CD14-positive monocyte (primary cell): ENCODE measurements at regions of chr1 and their contacts with region 1.

Region 1: DNA sequence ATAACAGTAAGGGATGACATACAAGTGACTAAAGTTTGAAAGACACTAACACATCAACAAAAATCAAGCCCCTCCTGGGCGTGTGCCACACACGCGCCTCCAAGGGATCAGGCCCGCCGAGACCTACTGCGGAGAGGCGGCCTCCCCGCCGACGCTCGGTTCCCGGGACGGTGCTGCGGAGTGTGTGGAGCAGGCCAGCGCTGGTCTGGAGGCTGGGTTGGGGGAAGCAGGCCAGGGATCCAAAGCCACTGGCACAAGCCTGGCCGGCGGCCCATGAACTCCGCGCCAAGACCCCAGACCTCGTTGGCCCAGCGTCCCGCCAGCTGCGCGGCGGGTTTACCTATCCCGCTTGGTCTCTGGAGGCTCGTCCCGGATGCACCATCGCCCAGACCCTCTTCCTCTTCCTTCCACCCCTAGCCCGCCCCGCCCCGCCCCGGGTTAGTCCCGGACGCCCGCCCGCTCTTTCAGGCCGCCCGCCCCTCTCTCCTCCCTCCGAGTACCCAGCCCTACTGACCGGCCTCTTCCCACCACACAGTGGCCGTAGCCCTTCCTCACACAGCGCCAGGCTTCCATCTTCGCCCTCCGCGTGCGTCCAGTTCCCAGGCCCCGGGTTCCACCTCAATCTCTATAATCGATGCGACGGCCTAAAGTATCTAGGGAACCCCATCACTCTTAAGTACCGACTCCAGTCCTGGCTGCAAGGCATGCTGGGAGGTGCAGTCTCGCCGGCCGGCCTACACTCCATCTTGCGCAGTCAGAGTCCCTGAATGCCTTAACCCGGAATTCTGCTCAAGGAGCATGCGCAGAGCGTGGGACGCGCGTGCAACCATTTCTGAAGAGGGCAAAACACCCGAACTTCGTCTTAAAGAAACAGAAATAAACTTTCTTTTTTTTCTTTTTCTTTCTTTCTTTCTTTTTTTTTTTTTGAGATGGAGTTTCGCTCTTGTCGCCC is at the start of gene ANGEL2:
- DNase-seq: peak; percentile 94 to 95 (median 94)
- H3K4me3 ChIP-seq: peak within 1 kb of the TSS; percentile 71 to 92 (median 81)
- H3K4me3 Mint-ChIP-seq: peak within 1 kb of the TSS; percentile 100
- H3K27ac ChIP-seq: peak within 1 kb of the TSS; percentile 87 to 90
- H3K27ac Mint-ChIP-seq: peak within 1 kb of the TSS; percentile 91 to 99 (median 98)
- H3K4me1 ChIP-seq: peaks cover 17 to 20% of the 10 kb centered on the region in 2 donors
- H3K4me1 Mint-ChIP-seq: peaks cover 17% of the 10 kb centered on the region
- H3K27me3 ChIP-seq: no peaks in the 10 kb centered on the region
- H3K27me3 Mint-ChIP-seq: no peaks in the 10 kb centered on the region
- CTCF ChIP-seq: no peak
- polyA plus RNA-seq, gene ANGEL2: 17.5 to 29.0 (median 18.3) TPM

Region 2: DNA sequence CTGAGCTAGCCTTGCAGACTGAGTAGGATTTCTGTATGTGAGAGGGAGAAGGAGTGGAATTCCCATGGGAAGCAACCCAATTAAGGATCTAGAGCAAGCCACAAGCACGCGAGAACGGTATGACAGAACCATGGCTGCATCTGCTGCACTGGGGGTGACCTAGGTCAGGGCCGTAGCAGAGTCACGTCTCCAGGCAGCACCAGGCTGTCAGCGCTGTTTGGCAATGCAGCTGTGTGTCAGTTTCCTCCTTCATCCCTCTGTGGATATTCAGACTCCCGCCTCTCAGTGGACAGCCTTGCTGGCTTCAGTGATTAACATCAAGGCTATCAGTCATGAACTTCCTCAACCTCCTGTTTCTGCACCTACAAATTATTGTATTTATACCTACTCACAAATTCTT is 848.3 kb before region 1 on chr1:
- intact Hi-C with region 1: no loop called
- DNase-seq: peak; percentile 50 to 59 (median 57)
- H3K4me3 ChIP-seq: no peak overlapping the region
- H3K4me3 Mint-ChIP-seq: peak overlapping the region in 1 of 2 donors; percentile 35
- H3K27ac ChIP-seq: no peak overlapping the region
- H3K27ac Mint-ChIP-seq: peak overlapping the region in 1 of 7 donors; percentile 2
- H3K4me1 ChIP-seq: peaks cover 8% of the 10 kb centered on the region in 2 donors
- H3K4me1 Mint-ChIP-seq: peaks cover 8% of the 10 kb centered on the region
- H3K27me3 ChIP-seq: no peaks in the 10 kb centered on the region
- H3K27me3 Mint-ChIP-seq: peaks cover 0 to 2% (median 0%) of the 10 kb centered on the region in 3 donors
- CTCF ChIP-seq: no peak

Region 3: DNA sequence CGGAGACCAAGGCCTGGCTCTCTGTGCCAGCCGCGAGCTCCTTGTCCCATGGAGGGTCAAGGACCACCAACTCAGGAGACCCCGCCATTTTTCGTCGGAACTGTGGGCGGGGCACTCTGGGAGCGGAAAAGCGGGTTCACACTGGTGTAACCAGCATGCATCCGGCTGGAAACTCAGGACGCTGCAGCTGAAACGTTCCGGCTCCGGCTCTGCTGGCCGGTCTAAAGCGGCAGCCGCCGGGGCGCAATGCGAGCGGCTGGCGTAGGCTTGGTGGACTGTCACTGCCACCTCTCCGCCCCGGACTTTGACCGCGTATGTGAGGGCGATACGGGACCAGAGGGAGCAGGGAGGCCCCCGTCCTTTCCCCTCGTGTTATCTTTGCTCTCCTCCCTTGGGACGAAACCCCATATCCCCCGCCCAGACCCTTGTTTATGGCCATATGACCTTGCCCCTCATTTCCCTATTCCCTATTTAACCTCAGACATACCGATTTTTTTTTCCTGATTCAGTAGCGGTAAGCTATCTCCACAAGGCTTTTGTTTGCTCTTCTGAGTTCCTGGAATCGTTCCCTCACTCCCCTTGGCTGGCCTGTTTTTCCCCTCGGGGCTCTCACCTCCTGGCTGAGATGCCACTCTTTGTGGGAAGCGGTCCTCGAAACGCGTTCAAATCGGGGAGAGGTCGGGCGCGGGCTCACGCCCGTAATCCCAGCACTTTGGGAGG is 223.5 kb before region 1 on chr1 and contains the starts of genes NSL1 and TATDN3:
- intact Hi-C with region 1: loop called in 1 of 2 experiments (anchors 10 kb)
- DNase-seq: peak; percentile 93 to 95 (median 95)
- H3K4me3 ChIP-seq: peak within 1 kb of the TSS; percentile 84 to 96 (median 92)
- H3K4me3 Mint-ChIP-seq: peak within 1 kb of the TSS; percentile 97 to 100
- H3K27ac ChIP-seq: peak within 1 kb of the TSS; percentile 96 to 98
- H3K27ac Mint-ChIP-seq: peak within 1 kb of the TSS; percentile 97 to 100 (median 98)
- H3K4me1 ChIP-seq: peaks cover 53% of the 10 kb centered on the region in 2 donors
- H3K4me1 Mint-ChIP-seq: peaks cover 38% of the 10 kb centered on the region
- H3K27me3 ChIP-seq: no peaks in the 10 kb centered on the region
- H3K27me3 Mint-ChIP-seq: no peaks in the 10 kb centered on the region
- CTCF ChIP-seq: no peak
- polyA plus RNA-seq, gene NSL1: 16.8 to 80.3 (median 62.3) TPM
- polyA plus RNA-seq, gene TATDN3: 12.1 to 34.3 (median 31.4) TPM

Region 4: GRCh38 chr1:212857992-212858460 is 157.3 kb before region 1 on chr1 and contains the start of gene FLVCR1:
- intact Hi-C with region 1: loop called in 1 of 2 experiments (anchors 10 kb)
- DNase-seq: peak; percentile 91 to 93 (median 91)
- H3K4me3 ChIP-seq: peak within 1 kb of the TSS; percentile 58 to 86 (median 85)
- H3K4me3 Mint-ChIP-seq: peak within 1 kb of the TSS; percentile 96 to 98
- H3K27ac ChIP-seq: peak within 1 kb of the TSS; percentile 75 to 93
- H3K27ac Mint-ChIP-seq: peak within 1 kb of the TSS; percentile 96 to 99 (median 98)
- H3K4me1 ChIP-seq: peaks cover 46 to 51% of the 10 kb centered on the region in 2 donors
- H3K4me1 Mint-ChIP-seq: peaks cover 15% of the 10 kb centered on the region
- H3K27me3 ChIP-seq: no peaks in the 10 kb centered on the region
- H3K27me3 Mint-ChIP-seq: peaks cover 0 to 2% (median 0%) of the 10 kb centered on the region in 3 donors
- CTCF ChIP-seq: no peak
- polyA plus RNA-seq, gene FLVCR1: 1.8 to 5.5 (median 2.8) TPM

Region 5: GRCh38 chr1:213051127-213051880 is 35.9 kb after region 1 on chr1 and contains the start of gene RPS6KC1:
- intact Hi-C with region 1: loop called in 1 of 2 experiments (anchors 5 kb)
- DNase-seq: peak; percentile 75 to 85 (median 81)
- H3K4me3 ChIP-seq: peak within 1 kb of the TSS; percentile 71 to 99 (median 84)
- H3K4me3 Mint-ChIP-seq: peak within 1 kb of the TSS; percentile 99 to 100
- H3K27ac ChIP-seq: peak within 1 kb of the TSS; percentile 82 to 97
- H3K27ac Mint-ChIP-seq: peak within 1 kb of the TSS; percentile 93 to 99 (median 98)
- H3K4me1 ChIP-seq: peaks cover 31 to 44% of the 10 kb centered on the region in 2 donors
- H3K4me1 Mint-ChIP-seq: peaks cover 50% of the 10 kb centered on the region
- H3K27me3 ChIP-seq: no peaks in the 10 kb centered on the region
- H3K27me3 Mint-ChIP-seq: peaks cover 0 to 3% (median 0%) of the 10 kb centered on the region in 3 donors
- CTCF ChIP-seq: no peak
- polyA plus RNA-seq, gene RPS6KC1: 8.9 to 16.0 (median 11.4) TPM

Region 6: GRCh38 chr1:213065800-213066199 is 50.4 kb after region 1 on chr1:
- intact Hi-C with region 1: no loop called
- DNase-seq: no peak
- H3K4me3 ChIP-seq: no peak overlapping the region
- H3K4me3 Mint-ChIP-seq: no peak overlapping the region
- H3K27ac ChIP-seq: peak overlapping the region in 1 of 2 donors; percentile 49
- H3K27ac Mint-ChIP-seq: peak overlapping the region in 4 of 7 donors; percentile 31 to 74 (median 45)
- H3K4me1 ChIP-seq: peaks cover 17 to 18% of the 10 kb centered on the region in 2 donors
- H3K4me1 Mint-ChIP-seq: peaks cover 23% of the 10 kb centered on the region
- H3K27me3 ChIP-seq: no peaks in the 10 kb centered on the region
- H3K27me3 Mint-ChIP-seq: peaks cover 0 to 5% (median 0%) of the 10 kb centered on the region in 3 donors
- CTCF ChIP-seq: no peak